ENCODE measurements at regions of chr17 and their contacts with region 1.

Region 1: GRCh38 chr17:43576563-43577229 is 30.6 kb upstream of the ETV4 start:
- DNase-seq: peak; percentile 60
- H3K4me3 ChIP-seq: no peak overlapping the region
- H3K27ac ChIP-seq: no peak overlapping the region
- H3K4me1 ChIP-seq: no peaks in the 10 kb centered on the region
- H3K27me3 ChIP-seq: no peaks in the 10 kb centered on the region
- CTCF ChIP-seq: peak; percentile 70

Region 2: DNA sequence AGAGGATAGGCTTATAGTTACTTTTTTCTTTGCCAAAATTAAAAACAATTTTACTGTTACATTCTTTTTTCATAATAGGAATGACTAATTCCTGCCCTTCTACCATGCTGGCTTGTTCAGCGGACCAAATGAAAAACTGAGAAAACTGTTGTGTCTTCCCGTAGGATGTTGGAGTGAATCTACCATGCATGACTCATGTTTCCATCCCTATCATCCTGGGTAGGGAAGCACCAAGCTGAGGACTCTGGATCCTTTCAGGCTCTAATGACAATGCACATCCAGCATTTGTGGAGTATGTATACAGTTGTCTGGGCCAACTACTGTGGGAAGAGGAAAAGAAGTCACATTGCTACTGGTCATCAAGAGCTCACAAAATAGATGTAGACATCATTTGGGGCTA is 134.0 kb before region 1 on chr17:
- CTCF ChIA-PET with region 1: no interaction called
- POLR2A ChIA-PET with region 1: no interaction called
- intact Hi-C with region 1: no loop called
- DNase-seq: no peak
- H3K4me3 ChIP-seq: no peak overlapping the region
- H3K27ac ChIP-seq: no peak overlapping the region
- H3K4me1 ChIP-seq: no peaks in the 10 kb centered on the region
- H3K27me3 ChIP-seq: no peaks in the 10 kb centered on the region
- CTCF ChIP-seq: no peak

Region 3: DNA sequence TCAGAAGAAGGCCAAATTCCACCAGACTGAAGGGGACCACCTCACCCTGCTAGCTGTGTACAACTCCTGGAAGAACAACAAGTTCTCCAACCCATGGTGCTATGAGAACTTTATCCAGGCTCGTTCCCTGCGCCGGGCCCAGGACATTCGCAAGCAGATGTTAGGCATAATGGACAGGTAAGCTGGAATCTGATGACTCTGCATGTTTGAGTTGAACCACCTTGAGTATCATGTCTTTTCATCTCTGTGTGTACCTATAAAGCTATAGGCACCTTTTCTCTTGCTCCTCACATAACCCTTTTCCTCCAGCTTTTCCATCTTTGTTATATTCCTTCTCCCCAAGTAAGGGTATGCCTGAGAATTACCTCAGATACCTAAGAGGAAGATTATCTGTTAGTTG is 55.3 kb before region 1 on chr17:
- CTCF ChIA-PET with region 1: no interaction called
- POLR2A ChIA-PET with region 1: no interaction called
- intact Hi-C with region 1: loop called (anchors 2 kb)
- DNase-seq: no peak
- H3K4me3 ChIP-seq: no peak overlapping the region
- H3K27ac ChIP-seq: no peak overlapping the region
- H3K4me1 ChIP-seq: no peaks in the 10 kb centered on the region
- H3K27me3 ChIP-seq: no peaks in the 10 kb centered on the region
- CTCF ChIP-seq: no peak

Region 4: DNA sequence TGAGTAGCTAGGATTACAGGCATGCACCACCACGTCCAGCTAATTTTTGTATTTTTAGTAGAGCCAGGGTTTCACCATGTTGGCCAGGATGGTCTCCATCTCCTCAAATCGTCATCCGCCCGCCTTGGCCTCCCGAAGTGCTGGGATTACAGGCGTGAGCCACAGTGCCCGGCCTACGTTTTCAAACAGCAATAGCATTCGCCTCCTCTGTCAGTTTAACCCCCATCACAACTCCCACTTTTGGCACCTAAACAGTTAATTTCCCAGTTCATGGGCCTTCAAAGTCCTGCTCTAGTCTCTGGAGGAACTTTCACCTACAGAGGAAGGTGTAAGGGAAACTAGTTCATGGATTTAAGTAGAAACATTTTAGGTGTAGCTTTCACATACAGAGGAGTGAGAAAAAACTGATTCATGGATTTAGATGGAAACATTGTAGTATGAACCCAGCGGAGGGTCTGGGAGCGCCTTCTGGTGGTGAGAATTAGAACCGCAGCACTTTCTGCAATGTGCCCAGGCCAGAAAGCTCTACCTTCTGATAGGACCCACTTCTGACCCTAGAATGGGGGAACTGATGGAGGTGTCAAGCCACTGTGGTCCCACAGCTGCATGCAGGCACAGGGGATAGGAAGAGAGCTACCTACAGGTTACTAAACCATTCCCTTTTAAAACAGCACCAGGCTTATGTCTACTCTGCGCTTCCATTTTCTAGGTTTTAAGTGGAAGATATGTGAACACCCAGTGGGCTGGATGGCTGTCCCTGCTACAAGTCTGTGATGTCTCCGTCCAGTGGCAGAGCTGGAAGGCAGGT is 97.0 kb after region 1 on chr17:
- CTCF ChIA-PET with region 1: interaction called, 23 read pairs
- POLR2A ChIA-PET with region 1: no interaction called
- intact Hi-C with region 1: loop called (anchors 1 kb)
- DNase-seq: peak; percentile 45
- H3K4me3 ChIP-seq: no peak overlapping the region
- H3K27ac ChIP-seq: no peak overlapping the region
- H3K4me1 ChIP-seq: peaks cover 12% of the 10 kb centered on the region
- H3K27me3 ChIP-seq: no peaks in the 10 kb centered on the region
- CTCF ChIP-seq: peak; percentile 74

Region 5: DNA sequence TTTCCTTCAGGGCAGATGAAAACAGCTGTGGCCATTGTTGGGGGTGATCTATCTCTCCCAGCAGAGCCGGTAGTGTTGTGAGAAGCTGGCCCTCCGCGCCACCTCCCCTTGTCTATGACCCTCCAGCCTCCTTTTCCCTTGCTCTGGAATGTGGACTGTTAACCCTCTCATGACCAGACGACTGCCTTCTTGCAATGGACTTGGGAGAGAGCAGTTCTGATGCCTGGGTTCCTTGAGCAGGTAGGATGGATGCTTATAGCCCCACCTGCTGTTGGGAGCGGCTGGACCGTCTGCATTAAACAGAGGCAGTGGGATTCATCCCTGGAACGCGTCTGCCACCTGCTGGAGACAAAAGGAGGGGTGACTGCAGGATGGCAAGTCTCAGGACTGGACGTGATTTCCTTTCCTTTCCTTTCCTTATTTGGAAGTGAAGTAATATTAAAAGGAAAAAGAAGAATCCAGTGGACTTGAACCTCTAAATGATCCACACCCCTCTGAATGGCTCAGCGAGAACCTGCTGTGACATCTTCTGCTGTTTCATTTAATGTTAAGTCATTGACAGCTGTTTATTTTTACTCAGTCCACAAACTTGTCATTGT is 183.7 kb after region 1 on chr17:
- CTCF ChIA-PET with region 1: no interaction called
- POLR2A ChIA-PET with region 1: no interaction called
- intact Hi-C with region 1: loop called (anchors 2 kb)
- DNase-seq: peak; percentile 81
- H3K4me3 ChIP-seq: no peak overlapping the region
- H3K27ac ChIP-seq: no peak overlapping the region
- H3K4me1 ChIP-seq: no peaks in the 10 kb centered on the region
- H3K27me3 ChIP-seq: no peaks in the 10 kb centered on the region
- CTCF ChIP-seq: peak; percentile 91